ENCODE measurements at regions of chr9 and their contacts with region 1.

Region 1: GRCh38 chr9:136944519-136945279 is at the starts of genes C8G and FBXW5:
- DNase-seq: peak; percentile 96
- H3K4me3 ChIP-seq: peak within 1 kb of the TSS; percentile 69 to 99 (median 94)
- H3K27ac ChIP-seq: peak within 1 kb of the TSS; percentile 82 to 95 (median 94)
- H3K4me1 ChIP-seq: peaks cover 39 to 54% (median 42%) of the 10 kb centered on the region in 4 donors
- H3K27me3 ChIP-seq: peaks cover 0 to 3% (median 0%) of the 10 kb centered on the region in 4 donors
- CTCF ChIP-seq: peak in 2 of 3 experiments; percentile 99
- EP300 ChIP-seq: no peak
- POLR2A ChIP-seq: no peak
- total RNA-seq, gene C8G: not detected
- total RNA-seq, gene FBXW5: 238 to 303 (median 267) TPM

Region 2: GRCh38 chr9:136865735-136866103 is 79.0 kb before region 1 on chr9:
- intact Hi-C with region 1: no loop called
- DNase-seq: no peak
- H3K4me3 ChIP-seq: peak overlapping the region; percentile 87 to 99 (median 94)
- H3K27ac ChIP-seq: peak overlapping the region; percentile 84 to 95 (median 92)
- H3K4me1 ChIP-seq: peaks cover 24 to 37% (median 27%) of the 10 kb centered on the region in 4 donors
- H3K27me3 ChIP-seq: no peaks in the 10 kb centered on the region
- CTCF ChIP-seq: no peak
- EP300 ChIP-seq: no peak
- POLR2A ChIP-seq: no peak

Region 3: DNA sequence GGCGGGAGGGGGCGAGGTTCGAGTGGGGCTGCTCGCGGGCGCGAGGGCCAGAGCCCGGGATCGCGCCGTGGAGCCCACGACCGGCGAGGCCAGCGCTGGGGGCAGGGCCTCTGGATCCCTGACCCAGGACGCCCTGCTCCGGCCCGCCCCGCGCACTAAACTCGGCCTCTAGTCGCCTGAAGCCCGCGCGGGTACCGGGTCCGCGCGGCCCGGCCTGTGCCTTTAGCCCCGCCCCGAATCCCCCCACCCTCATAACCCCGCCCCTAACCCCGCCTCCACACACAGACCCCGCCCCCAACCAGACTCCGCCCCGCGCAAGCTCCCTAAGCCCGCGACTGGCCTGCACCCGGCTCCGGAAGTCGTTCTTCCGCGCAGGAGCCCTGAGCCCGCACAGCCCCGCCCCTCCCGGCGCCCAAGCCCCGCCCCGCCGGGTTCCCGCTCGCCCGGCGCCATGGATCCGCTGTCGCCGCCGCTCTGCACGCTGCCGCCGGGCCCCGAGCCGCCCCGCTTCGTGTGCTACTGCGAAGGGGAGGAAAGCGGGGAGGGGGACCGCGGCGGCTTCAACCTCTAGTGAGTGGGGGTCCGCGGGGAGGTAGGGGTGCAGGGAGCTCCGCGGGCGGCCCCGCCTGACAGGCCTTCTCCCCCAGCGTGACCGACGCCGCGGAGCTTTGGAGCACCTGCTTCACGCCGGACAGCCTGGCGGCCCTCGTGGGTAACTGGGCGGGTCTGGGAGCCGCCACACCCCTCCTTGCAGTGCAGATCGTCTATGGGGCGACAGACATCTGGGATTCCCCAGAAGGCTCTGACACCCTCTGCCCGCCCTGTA is 47.5 kb after region 1 on chr9 and contains the start of gene PAXX:
- intact Hi-C with region 1: loop called (anchors 5 kb)
- DNase-seq: peak; percentile 96
- H3K4me3 ChIP-seq: peak within 1 kb of the TSS; percentile 67 to 86 (median 74)
- H3K27ac ChIP-seq: peak within 1 kb of the TSS; percentile 87 to 91 (median 88)
- H3K4me1 ChIP-seq: peaks cover 32 to 57% (median 47%) of the 10 kb centered on the region in 4 donors
- H3K27me3 ChIP-seq: peaks cover 0 to 52% (median 14%) of the 10 kb centered on the region in 4 donors
- CTCF ChIP-seq: no peak
- EP300 ChIP-seq: no peak
- POLR2A ChIP-seq: no peak
- total RNA-seq, gene PAXX: 28.8 to 39.9 (median 37.8) TPM

Region 4: GRCh38 chr9:137034863-137035761 is 90.4 kb after region 1 on chr9:
- intact Hi-C with region 1: loop called (anchors 5 kb)
- DNase-seq: no peak
- H3K4me3 ChIP-seq: peak overlapping the region in 1 of 4 donors; percentile 14
- H3K27ac ChIP-seq: no peak overlapping the region
- H3K4me1 ChIP-seq: peaks cover 9 to 16% (median 14%) of the 10 kb centered on the region in 4 donors
- H3K27me3 ChIP-seq: peaks cover 0 to 8% (median 0%) of the 10 kb centered on the region in 4 donors
- CTCF ChIP-seq: peak; percentile 88 to 94 (median 90)
- EP300 ChIP-seq: no peak
- POLR2A ChIP-seq: no peak

Region 5: GRCh38 chr9:137301081-137301947 is 356.6 kb after region 1 on chr9:
- intact Hi-C with region 1: no loop called
- DNase-seq: no peak
- H3K4me3 ChIP-seq: peak overlapping the region; percentile 50 to 59 (median 56)
- H3K27ac ChIP-seq: peak overlapping the region; percentile 66 to 76 (median 73)
- H3K4me1 ChIP-seq: peaks cover 68 to 93% (median 75%) of the 10 kb centered on the region in 4 donors
- H3K27me3 ChIP-seq: peaks cover 4 to 93% (median 41%) of the 10 kb centered on the region in 4 donors
- CTCF ChIP-seq: peak in 2 of 3 experiments; percentile 18
- EP300 ChIP-seq: no peak
- POLR2A ChIP-seq: no peak

Measured in esophagus muscularis mucosa (tissue), 4 donors.